Panc1 (cell line): ENCODE measurements at regions of chr10 and their contacts with region 1.

Region 1: DNA sequence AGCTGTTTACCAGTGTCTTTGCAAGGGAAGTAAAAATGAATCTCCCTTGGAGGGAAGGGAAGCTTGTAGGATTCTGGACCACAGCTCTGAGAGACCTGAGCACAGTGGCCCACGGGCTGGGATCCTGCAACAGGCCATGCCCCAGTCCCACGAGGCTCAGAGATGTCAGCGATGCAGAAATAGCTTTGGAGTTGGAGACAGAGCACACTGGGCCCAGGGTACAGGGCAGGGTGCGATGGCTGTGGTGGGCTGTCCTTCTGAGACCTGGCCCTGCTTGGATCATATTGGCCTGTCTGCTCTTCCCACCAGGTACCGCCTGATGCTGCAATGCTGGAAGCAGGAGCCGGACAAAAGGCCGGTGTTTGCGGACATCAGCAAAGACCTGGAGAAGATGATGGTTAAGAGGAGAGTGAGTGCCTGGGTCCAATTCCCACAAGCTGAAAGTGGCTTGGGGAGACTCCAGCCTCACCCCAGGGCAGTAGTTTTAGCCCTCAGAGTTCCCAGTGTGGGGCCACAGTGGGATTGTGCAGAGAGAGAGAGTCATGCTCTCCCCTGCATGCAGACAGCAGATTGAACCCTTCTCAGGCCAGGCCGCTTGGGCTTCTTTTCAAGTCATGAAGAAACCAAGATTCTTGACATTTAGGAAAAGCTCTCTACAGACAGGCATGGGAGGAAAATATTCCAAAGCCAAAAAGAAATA is 13.5 kb upstream of the CSGALNACT2 start:
- DNase-seq: no peak
- ATAC-seq: no peak
- H3K4me3 ChIP-seq: no peak overlapping the region
- H3K27ac ChIP-seq: no peak overlapping the region
- H3K4me1 ChIP-seq: no peaks in the 10 kb centered on the region
- H3K27me3 ChIP-seq: no peaks in the 10 kb centered on the region
- CTCF ChIP-seq: no peak

Region 2: GRCh38 chr10:43237631-43238446 is 113.1 kb after region 1 on chr10:
- CTCF ChIA-PET with region 1: interaction called, 10 read pairs
- POLR2A ChIA-PET with region 1: no interaction called
- in situ Hi-C with region 1: no loop called
- intact Hi-C with region 1: no loop called
- DNase-seq: no peak
- ATAC-seq: no peak
- H3K4me3 ChIP-seq: no peak overlapping the region
- H3K27ac ChIP-seq: no peak overlapping the region
- H3K4me1 ChIP-seq: no peaks in the 10 kb centered on the region
- H3K27me3 ChIP-seq: no peaks in the 10 kb centered on the region
- CTCF ChIP-seq: no peak